PC-3 (cell line): ENCODE measurements at regions of chr9 and their contacts with region 1.

Region 1: DNA sequence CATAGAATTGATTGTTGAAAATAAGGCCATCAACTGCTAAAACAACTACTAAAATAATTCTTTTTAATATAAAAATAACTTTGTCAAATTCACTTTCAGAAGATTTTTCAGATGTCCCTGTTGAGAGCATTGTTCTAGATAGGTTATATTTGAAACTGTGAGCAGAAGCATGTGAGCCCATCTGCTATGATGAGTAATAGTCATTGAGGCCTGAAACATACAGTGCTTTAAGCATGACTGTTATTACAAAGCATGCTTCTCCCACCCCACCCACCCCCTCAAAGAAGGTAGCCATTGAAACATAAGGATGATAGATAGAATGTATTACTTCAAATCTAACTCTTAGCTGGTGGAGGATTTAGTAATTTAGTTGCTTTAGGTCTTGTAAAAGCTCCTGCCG is 86.0 kb downstream of the UHRF2 start:
- DNase-seq: peak; percentile 3
- ATAC-seq: no peak
- H3K4me3 ChIP-seq: no peak overlapping the region
- H3K27ac ChIP-seq: no peak overlapping the region
- H3K4me1 ChIP-seq: peaks cover 16% of the 10 kb centered on the region
- H3K27me3 ChIP-seq: no peaks in the 10 kb centered on the region
- CTCF ChIP-seq: no peak

Region 2: GRCh38 chr9:6428940-6429889 is 69.8 kb before region 1 on chr9:
- CTCF ChIA-PET with region 1: no interaction called
- POLR2A ChIA-PET with region 1: interaction called, 3 read pairs
- intact Hi-C with region 1: loop called (anchors 10 kb)
- DNase-seq: no peak
- ATAC-seq: no peak
- H3K4me3 ChIP-seq: no peak overlapping the region
- H3K27ac ChIP-seq: no peak overlapping the region
- H3K4me1 ChIP-seq: no peaks in the 10 kb centered on the region
- H3K27me3 ChIP-seq: no peaks in the 10 kb centered on the region
- CTCF ChIP-seq: no peak